ENCODE measurements at regions of chr12 and their contacts with region 1.

Region 1: GRCh38 chr12:113422030-113422885 is at the start of gene SDSL:
- DNase-seq: peak; percentile 83
- H3K4me3 ChIP-seq: peak within 1 kb of the TSS; percentile 58
- H3K27ac ChIP-seq: peak within 1 kb of the TSS; percentile 59
- H3K4me1 ChIP-seq: no peaks in the 10 kb centered on the region
- H3K27me3 ChIP-seq: no peaks in the 10 kb centered on the region
- CTCF ChIP-seq: no peak
- total RNA-seq, gene SDSL: 14.2 to 35.2 TPM

Region 2: DNA sequence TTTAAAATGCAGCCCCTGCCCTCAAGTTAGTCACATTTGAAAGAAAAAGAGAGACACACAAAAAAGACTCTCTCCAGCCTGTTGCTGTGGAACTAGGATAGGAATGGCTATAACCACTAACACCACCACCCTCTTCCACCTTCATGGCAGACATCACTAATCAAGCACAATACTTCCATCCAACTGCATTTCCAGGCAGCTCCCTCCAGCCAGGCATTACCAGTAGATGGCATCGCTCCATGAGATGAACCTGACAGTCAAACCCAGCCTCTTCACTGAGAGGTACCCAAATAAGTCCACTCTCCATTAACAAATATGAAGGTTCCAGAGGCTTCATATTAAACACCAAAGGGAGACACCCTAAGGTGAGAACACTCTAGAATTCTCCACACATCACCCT is 111.8 kb before region 1 on chr12:
- intact Hi-C with region 1: loop called (anchors 2 kb)
- DNase-seq: no peak
- H3K4me3 ChIP-seq: no peak overlapping the region
- H3K27ac ChIP-seq: no peak overlapping the region
- H3K4me1 ChIP-seq: no peaks in the 10 kb centered on the region
- H3K27me3 ChIP-seq: no peaks in the 10 kb centered on the region
- CTCF ChIP-seq: no peak